GM18951 (cell line): ENCODE measurements at regions of chr9 and their contacts with region 1.

Region 1: GRCh38 chr9:83622939-83623678 is at the start of gene IDNK:
- POLR2A ChIP-seq: peak; percentile 76

Region 2: DNA sequence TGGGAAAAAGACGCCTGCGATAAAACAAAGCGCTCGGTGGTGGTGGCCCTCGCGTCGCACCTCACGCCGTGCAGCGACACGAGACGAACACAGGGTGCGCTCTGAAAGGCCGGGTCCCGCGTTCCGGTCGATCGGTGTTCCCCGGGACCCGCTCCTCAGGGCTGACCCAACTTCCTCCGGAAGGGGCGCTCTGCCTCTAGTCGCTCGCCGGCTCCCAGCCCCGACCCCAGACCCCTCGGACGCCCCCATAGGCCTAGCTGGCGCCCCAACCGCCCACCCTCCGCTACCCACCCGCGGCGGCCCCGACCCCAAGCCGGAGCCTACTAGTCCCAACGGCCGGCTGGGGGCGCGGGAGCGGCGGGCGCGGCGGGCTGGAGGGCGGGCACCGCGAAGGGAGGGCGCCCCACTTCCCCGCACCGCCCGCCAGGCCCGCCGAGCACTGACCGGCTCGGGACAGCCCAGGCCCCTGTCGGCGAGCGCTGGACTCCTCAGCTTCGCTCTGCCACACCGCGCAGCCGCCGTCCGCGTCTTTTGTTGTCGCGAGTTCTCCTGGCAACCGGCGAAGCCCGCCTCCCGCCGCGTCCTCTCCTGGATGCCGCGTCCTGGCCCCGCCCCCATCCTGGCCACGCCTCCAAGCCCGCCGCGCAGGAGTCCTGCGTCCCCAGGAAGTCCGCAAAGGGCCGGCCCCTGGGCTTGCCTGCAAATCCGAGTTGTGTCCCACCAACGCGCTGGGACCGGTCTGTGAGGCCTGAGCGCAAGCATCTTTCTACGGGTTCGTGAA is 298.0 kb after region 1 on chr9 and contains the start of gene KIF27:
- in situ Hi-C with region 1: loop called (anchors 25 kb)
- POLR2A ChIP-seq: peak; percentile 94

Region 3: GRCh38 chr9:84045482-84046097 is 422.5 kb after region 1 on chr9:
- in situ Hi-C with region 1: no loop called
- POLR2A ChIP-seq: no peak